ENCODE measurements at regions of chr2 and their contacts with region 1.

Region 1: DNA sequence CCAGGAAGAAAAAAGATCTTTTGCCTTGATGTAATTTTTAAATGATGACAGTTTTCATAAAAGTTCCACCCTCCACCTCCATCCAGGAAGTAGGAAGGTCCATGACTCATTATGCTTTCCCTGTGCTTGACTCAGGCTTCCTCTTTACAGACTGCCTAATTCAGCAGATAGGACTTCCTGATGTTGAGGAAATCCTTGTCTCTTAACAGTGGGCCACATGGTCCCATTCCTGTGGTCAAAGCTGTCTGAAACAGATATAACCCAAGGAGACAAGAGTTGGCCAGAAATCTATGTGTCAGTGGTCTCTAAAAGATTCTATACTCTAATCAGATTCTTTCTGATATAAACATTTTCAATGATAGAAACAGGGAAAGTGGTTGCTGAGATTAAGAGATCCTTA is 119.1 kb downstream of the BAZ2B start:
- DNase-seq: peak in 1 of 9 experiments; percentile 22
- ATAC-seq: no peak
- H3K4me3 ChIP-seq: no peak overlapping the region
- H3K4me3 Mint-ChIP-seq: no peak overlapping the region
- H3K27ac ChIP-seq: peak overlapping the region in 1 of 2 experiments; percentile 5
- H3K27ac Mint-ChIP-seq: peak overlapping the region; percentile 15
- H3K4me1 ChIP-seq: peaks cover 5% of the 10 kb centered on the region
- H3K4me1 Mint-ChIP-seq: peaks cover 14% of the 10 kb centered on the region
- H3K27me3 ChIP-seq: no peaks in the 10 kb centered on the region
- H3K27me3 Mint-ChIP-seq: no peaks in the 10 kb centered on the region
- CTCF ChIP-seq: no peak

Region 2: DNA sequence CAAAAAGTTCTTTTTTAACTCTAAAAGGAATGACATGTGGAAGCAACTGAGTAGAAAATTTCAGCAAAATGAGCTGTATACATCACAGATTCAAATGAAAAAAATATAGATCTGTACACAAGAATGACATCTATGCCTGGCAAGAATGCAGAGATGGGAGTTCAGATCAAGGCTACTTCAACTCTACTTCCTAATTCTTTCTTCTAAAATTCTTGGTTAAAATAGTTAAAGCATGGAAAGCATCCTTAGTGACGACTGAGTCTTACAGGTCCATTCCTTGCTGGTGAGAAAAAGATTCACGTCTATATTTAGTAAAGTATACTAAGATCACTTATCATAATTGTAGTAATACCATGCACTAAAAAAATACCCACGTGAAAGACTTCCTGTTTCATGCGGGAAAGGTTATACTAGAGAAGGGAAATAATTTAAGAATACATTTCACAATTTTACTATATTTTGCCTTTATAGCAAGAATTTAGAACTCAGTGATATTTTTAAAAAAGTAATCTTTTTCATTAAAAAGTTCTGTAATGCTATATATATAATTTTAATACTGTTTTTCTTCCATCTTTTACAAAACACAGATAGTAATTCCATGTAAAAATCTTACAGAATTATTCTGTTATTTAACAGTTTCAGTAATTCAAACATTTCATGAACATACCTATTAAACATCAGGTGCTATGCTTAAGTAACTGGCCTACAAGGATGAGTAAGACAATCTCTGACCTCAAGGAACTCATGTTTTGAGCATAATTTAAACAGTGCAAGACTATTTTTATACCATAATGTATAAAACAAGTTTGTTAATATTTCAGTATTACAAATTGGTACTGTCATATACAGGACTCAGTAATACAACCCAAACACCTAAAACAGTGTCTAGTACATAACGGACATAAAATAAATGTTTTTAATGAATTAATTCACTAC is 40.5 kb before region 1 on chr2:
- CTCF ChIA-PET with region 1: no interaction called
- POLR2A ChIA-PET with region 1: no interaction called
- intact Hi-C with region 1: loop called in 1 of 2 experiments (anchors 1 kb)
- DNase-seq: peak in 1 of 9 experiments; percentile 20
- ATAC-seq: no peak
- H3K4me3 ChIP-seq: no peak overlapping the region
- H3K4me3 Mint-ChIP-seq: no peak overlapping the region
- H3K27ac ChIP-seq: no peak overlapping the region
- H3K27ac Mint-ChIP-seq: no peak overlapping the region
- H3K4me1 ChIP-seq: peaks cover 7% of the 10 kb centered on the region
- H3K4me1 Mint-ChIP-seq: peaks cover 30% of the 10 kb centered on the region
- H3K27me3 ChIP-seq: no peaks in the 10 kb centered on the region
- H3K27me3 Mint-ChIP-seq: no peaks in the 10 kb centered on the region
- CTCF ChIP-seq: no peak